AG04449 (cell line): ENCODE measurements at regions of chr17 and their contacts with region 1.

Region 1: DNA sequence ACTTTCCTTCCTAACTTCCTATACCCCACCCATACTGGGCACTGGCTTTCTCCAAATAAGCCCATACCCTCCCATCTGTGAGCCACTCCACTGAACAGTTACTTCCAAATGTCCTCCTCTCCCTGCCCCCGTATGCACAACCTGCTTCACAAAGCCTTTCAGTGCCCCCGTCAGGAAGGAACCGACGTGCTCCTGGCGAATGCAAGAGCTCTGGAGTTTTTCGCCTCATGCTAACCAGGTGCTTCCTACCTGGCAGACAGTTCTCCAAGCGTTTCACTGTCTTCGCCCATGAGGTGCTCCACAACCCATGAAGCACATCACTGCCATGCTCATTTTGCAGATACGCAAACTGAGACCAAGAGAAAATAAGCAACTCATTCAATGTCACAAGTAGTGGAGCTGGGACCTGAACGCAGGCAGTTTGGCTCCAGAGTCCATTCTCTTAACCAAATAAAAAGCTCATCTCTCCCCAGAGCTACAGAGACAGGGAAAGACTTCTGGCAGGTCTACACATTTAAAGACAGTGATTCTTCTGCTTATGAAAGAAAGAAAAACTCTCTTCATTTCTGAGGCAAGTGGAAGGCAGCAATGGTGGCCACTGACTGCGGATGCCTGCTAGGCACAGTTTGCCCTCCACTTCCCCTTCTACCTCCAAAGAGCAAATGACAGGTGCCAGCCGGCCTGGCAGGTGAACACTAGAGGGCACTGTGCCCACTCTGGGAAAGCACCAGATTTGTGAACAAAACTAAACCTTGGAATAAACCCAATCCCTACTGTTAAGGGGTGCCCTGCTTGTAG is 23.8 kb downstream of the SPHK1 start:
- DNase-seq: no peak
- H3K4me3 ChIP-seq: no peak overlapping the region
- CTCF ChIP-seq: peak; percentile 80

Region 2: GRCh38 chr17:76422406-76422805 is 14.2 kb after region 1 on chr17:
- CTCF ChIA-PET with region 1: interaction called, 578 read pairs
- POLR2A ChIA-PET with region 1: no interaction called
- DNase-seq: no peak
- H3K4me3 ChIP-seq: no peak overlapping the region
- CTCF ChIP-seq: no peak

Region 3: GRCh38 chr17:76427501-76428231 is 19.4 kb after region 1 on chr17:
- CTCF ChIA-PET with region 1: interaction called, 11 read pairs
- POLR2A ChIA-PET with region 1: no interaction called
- DNase-seq: no peak
- H3K4me3 ChIP-seq: no peak overlapping the region
- CTCF ChIP-seq: no peak

Region 4: DNA sequence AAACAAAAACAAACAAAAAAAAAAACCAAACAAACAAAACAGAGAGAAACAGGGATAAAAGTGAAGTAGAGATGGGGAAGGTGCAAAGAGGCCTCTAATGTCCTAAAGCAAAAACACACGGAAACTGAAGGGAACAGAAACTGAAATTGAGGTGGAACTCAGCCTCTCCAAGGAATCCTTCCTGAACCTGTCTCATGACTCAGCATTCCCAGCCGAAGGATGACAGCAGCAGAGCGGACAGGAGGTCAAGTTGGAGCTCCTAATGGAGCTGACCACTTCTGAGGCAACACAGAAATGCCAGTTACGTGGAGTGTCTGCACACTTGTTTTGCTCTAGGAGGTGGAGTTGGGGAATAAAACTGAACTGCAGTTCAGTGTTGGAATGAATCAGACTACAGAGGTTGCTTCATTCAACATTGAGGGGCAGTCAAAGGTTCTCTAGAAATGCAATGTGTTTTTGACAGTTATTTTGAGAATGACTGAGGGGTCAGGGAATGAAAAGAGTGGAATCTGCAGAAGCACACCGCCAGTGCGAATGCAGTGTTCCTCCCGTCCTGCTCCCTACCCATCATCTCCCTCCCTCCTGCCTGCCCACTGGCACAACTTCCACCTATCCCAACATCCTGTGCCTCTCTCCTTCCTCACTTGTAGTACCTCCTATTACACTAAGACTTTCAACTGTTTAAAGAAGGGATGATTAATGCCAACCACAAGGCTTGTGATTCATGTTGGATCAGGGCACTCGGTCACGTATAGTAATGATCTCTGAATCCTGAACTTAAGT is 38.4 kb after region 1 on chr17:
- CTCF ChIA-PET with region 1: interaction called, 17 read pairs
- POLR2A ChIA-PET with region 1: no interaction called
- DNase-seq: no peak
- H3K4me3 ChIP-seq: peak overlapping the region; percentile 10
- CTCF ChIP-seq: no peak

Region 5: DNA sequence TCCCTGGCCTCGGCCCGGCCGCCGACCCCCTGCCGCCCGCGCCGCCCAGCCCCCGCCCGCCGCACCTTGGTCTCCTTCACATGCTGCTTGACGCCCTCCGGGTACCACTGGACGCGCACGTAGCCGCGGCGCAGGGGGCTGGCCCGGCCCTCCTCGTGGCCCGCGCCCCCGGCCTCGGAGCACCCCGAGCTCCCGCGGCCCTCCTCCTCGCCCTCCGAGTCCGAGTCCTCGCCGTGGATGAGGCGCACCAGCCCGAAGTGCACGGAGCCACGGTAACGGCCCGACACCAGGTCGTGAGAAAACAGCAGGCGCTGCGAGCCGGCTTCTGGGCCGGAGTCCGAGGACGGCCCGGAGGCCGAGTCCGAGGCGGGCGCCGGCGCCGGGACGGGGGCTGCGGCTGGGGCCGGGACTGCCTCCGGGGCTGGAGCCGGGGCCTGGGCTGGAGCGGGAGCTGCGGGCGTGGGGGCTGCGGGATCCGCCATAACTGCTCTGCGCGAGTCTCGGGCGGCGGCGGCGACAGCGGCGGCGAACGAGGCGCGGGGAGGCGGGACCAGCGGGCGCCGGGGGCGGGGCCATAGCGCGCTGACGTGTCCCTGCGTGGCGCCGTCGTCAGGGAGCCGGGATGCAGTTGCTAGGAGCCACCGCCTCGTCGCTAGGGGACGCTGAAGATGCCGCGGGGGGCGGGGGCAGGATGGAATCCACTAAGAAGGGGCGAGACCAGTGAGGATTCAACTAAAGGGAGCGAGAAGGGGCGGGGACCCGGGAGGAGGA is 44.6 kb after region 1 on chr17 and contains the start of gene UBE2O:
- CTCF ChIA-PET with region 1: interaction called, 75 read pairs
- POLR2A ChIA-PET with region 1: no interaction called
- DNase-seq: no peak
- H3K4me3 ChIP-seq: peak within 1 kb of the TSS; percentile 77
- CTCF ChIP-seq: peak; percentile 80

Region 6: DNA sequence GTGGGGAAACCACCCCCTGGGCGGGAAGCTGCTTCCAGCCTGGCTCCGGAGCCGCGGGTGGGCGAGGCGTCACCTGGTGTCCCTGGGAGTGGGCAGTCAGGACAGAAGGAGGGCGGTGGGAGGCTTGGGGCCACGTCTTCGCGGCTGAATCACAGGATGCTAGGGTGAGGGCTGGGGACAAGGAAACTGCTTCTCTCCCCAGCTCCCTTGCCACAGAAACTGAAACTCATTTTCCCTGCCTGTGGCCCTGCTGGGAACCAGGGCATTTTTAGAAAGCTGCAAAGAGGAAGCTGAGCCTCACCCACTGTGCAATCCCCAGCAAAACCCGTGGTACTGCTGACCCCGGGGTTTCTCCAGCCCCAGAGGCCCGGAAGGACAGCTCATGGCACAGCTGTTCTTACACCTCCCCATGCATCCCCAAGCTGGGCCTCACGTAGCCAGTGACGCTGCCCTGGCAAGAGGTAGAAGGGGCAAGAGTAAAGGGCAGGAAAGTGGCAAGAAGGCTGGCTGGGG is 84.8 kb after region 1 on chr17:
- CTCF ChIA-PET with region 1: no interaction called
- POLR2A ChIA-PET with region 1: no interaction called
- DNase-seq: no peak
- H3K4me3 ChIP-seq: peak overlapping the region; percentile 12; the same call in 1 of the 2 replicates
- CTCF ChIP-seq: no peak

Region 7: DNA sequence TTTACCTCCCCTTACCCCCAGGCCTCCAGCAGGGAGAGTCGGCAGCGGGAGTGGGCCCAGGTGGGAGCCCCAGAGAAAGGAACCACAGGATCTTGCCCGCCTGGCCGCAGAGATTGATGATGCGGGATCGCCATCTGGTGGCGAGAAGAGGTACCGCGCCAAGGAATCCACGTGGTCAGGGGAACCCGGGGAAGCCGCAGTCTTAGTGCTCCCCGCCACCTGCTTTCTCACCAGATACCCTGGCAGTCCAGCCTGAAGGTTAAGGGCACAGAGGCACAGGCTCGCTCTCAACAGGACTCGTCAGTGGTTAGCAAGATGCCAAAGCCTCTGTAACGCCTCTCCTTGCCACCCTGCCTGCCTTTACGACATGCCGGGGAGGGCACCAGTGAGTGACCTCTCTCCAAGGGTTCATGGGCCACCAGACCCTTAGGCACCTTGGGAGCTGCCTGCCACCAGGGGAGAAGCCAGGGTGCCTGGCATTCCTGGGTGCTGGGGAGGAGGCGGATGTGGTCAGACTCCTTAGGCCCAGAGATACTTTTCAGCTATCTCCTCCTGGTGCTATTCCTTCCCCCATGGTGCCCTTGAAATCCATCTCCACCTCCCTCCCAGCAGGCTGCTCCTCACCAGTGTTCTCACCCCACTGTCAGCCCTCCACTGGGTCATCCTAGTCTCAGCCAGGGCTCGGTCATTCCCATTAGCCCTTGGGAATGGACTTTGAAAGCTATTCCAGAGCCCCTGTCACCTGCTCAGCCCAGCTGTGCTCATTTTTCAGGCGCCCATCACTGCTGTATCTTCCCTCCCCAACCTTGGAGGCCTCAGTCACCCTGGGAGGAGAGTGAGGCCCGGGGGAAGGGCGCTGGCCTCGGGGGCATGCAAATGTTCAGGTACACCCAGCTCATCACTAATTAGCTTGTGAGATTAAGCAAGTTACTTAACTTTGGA is 98.4 kb after region 1 on chr17:
- CTCF ChIA-PET with region 1: interaction called, 22 read pairs
- POLR2A ChIA-PET with region 1: no interaction called
- DNase-seq: no peak
- H3K4me3 ChIP-seq: no peak overlapping the region
- CTCF ChIP-seq: peak; percentile 91